B cell (primary cell): ENCODE measurements at regions of chr1 and their contacts with region 1.

Region 1: GRCh38 chr1:66282343-66282852 is 251.6 kb upstream of the SGIP1 start:
- DNase-seq: peak; percentile 94
- ATAC-seq: peak; percentile 91
- H3K4me3 ChIP-seq: peak overlapping the region in 2 of 5 experiments; percentile 10 to 39
- H3K4me3 Mint-ChIP-seq: peak overlapping the region; percentile 80
- H3K27ac ChIP-seq: peak overlapping the region; percentile 86 to 88
- H3K27ac Mint-ChIP-seq: peak overlapping the region; percentile 92
- H3K4me1 ChIP-seq: peaks cover 62 to 67% of the 10 kb centered on the region in 2 donors
- H3K4me1 Mint-ChIP-seq: peaks cover 79% of the 10 kb centered on the region
- H3K27me3 ChIP-seq: no peaks in the 10 kb centered on the region
- H3K27me3 Mint-ChIP-seq: no peaks in the 10 kb centered on the region
- CTCF ChIP-seq: peak; percentile 44

Region 2: DNA sequence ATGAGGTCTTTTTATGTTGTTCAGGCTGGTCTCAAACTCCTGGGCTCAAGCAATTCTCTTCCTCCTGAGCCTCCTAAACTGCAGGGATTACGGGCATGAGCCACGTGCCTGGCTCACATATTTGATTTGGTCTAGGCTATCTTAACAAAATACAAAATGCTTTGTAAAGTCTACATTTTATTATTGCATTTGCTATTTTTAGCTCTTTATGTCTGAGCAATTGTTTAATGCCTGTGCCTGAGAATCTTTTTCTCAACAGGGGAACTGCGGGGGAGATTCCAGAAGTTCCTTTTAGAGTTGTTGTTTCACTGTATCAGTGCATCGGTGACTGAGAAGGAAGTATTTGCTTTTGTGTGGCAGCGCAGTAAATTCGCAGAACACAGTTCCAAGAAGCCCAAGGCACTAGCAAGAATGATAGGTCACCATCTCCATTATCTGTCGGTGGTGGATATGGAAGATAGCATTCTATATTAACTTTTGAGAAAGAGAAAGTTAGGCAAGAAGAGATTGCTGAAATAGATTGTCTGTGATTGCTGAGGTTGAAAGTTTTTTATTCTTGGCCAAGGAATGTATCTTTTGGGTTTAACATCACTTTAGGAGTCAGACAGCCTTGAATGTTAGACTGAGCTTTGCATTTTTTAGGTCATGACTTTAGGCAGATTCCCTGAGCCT is 322.4 kb before region 1 on chr1:
- CTCF ChIA-PET with region 1: no interaction called
- POLR2A ChIA-PET with region 1: no interaction called
- intact Hi-C with region 1: no loop called
- DNase-seq: no peak
- ATAC-seq: no peak
- H3K4me3 ChIP-seq: no peak overlapping the region
- H3K4me3 Mint-ChIP-seq: no peak overlapping the region
- H3K27ac ChIP-seq: no peak overlapping the region
- H3K27ac Mint-ChIP-seq: no peak overlapping the region
- H3K4me1 ChIP-seq: no peaks in the 10 kb centered on the region
- H3K4me1 Mint-ChIP-seq: no peaks in the 10 kb centered on the region
- H3K27me3 ChIP-seq: peaks cover 0 to 1% (median 0%) of the 10 kb centered on the region in 4 experiments
- H3K27me3 Mint-ChIP-seq: peaks cover 12% of the 10 kb centered on the region
- CTCF ChIP-seq: no peak

Region 3: DNA sequence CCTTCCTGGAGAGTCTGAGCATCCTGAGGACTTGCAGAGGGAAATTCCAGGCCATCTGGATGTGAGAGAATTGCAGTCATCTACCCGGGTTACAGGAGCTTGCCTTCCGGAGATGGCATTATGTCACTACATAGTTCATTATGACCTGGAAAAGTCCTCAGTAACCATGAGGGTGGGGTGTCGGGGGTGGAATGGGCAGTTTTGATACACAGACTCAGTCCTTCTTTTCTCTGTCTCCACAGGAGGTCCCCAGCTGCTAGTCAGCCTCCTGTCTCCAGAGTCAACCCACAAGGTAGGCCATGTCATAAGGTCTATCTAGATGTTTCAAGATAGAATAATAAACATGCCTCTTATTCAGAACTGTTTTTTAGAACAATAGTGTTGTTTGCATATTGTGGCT is 16.6 kb before region 1 on chr1:
- CTCF ChIA-PET with region 1: interaction called, 8 read pairs
- POLR2A ChIA-PET with region 1: interaction called, 7 read pairs
- intact Hi-C with region 1: loop called (anchors 1 kb)
- DNase-seq: no peak
- ATAC-seq: peak; percentile 31
- H3K4me3 ChIP-seq: no peak overlapping the region
- H3K4me3 Mint-ChIP-seq: no peak overlapping the region
- H3K27ac ChIP-seq: no peak overlapping the region
- H3K27ac Mint-ChIP-seq: no peak overlapping the region
- H3K4me1 ChIP-seq: peaks cover 0 to 4% of the 10 kb centered on the region in 2 donors
- H3K4me1 Mint-ChIP-seq: peaks cover 15% of the 10 kb centered on the region
- H3K27me3 ChIP-seq: no peaks in the 10 kb centered on the region
- H3K27me3 Mint-ChIP-seq: no peaks in the 10 kb centered on the region
- CTCF ChIP-seq: no peak

Region 4: GRCh38 chr1:66339944-66340343 is 57.5 kb after region 1 on chr1:
- CTCF ChIA-PET with region 1: interaction called, 12 read pairs
- POLR2A ChIA-PET with region 1: interaction called, 10 read pairs
- intact Hi-C with region 1: loop called (anchors 1 kb)
- DNase-seq: peak; percentile 50
- ATAC-seq: no peak
- H3K4me3 ChIP-seq: peak overlapping the region in 3 of 5 experiments; percentile 22 to 27 (median 27)
- H3K4me3 Mint-ChIP-seq: peak overlapping the region; percentile 82
- H3K27ac ChIP-seq: peak overlapping the region; percentile 53 to 94
- H3K27ac Mint-ChIP-seq: peak overlapping the region; percentile 67
- H3K4me1 ChIP-seq: peaks cover 77 to 78% of the 10 kb centered on the region in 2 donors
- H3K4me1 Mint-ChIP-seq: peaks cover 77% of the 10 kb centered on the region
- H3K27me3 ChIP-seq: no peaks in the 10 kb centered on the region
- H3K27me3 Mint-ChIP-seq: no peaks in the 10 kb centered on the region
- CTCF ChIP-seq: no peak

Region 5: DNA sequence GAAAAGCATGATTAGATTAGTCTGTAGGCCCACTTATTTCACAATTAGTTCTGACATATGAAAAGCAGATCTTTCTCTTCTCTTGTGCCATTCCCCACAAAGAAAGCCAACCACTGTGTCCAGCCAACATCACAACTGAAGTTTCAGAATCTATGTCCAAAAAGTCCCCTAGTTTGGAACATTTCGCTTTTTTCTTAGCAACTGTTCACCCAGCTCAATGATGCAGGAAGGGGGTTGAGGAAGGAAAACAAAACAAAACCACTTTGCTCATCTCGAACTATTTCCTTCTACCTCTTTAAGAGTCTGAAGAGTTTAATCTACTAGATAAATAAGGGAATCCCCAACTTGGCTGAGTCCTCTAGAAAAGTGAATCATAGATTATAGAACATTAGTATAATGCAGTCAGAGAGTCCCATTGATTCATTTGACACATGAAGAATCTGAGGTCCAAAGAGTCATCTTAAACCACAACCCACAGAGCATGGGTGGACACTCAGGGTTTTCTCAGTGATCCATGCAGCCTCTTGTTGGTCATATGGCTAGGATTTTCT is 92.2 kb after region 1 on chr1:
- CTCF ChIA-PET with region 1: interaction called, 7 read pairs
- POLR2A ChIA-PET with region 1: interaction called, 6 read pairs
- intact Hi-C with region 1: loop called (anchors 1 kb)
- DNase-seq: peak; percentile 90
- ATAC-seq: peak; percentile 73
- H3K4me3 ChIP-seq: peak overlapping the region in 1 of 5 experiments; percentile 13
- H3K4me3 Mint-ChIP-seq: peak overlapping the region; percentile 69
- H3K27ac ChIP-seq: peak overlapping the region; percentile 83 to 90
- H3K27ac Mint-ChIP-seq: peak overlapping the region; percentile 81
- H3K4me1 ChIP-seq: peaks cover 82 to 89% of the 10 kb centered on the region in 2 donors
- H3K4me1 Mint-ChIP-seq: peaks cover 86% of the 10 kb centered on the region
- H3K27me3 ChIP-seq: no peaks in the 10 kb centered on the region
- H3K27me3 Mint-ChIP-seq: no peaks in the 10 kb centered on the region
- CTCF ChIP-seq: no peak

Region 6: DNA sequence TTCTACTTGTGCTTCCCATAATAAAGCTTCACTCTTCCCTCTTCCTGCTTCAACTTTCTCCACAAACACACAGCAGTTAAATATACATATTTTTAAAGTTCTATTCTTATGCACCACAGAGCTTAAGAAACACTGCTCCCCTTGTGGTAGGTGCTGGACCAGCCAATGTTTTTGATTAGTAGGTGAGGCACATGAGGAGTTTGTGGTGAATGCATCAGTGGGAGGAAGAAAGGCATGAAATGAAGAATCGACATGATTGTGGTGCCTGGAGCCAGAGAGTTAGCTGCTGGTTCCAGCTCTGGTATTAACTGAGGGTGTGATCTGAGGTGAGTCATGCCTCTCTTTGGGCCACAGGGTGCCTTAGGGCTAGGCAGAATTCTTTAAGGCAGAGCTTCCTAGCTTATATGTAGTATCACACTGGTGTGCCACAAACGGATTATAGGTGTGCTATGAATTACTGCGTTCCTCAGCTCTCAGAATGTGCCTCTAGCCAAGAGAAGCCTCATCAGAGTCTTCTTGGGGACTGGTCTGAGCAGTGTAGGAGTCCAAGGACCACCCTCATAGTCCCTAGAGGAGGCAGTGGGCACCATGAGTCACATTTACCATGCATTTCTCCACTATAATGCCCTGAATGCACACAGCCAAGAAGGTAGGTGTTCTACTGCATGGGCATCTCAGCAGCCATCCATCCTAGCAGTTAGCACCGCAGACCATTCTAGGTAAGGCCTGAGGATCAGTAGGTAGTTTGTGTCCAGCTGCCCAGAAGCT is 154.2 kb after region 1 on chr1:
- CTCF ChIA-PET with region 1: interaction called, 8 read pairs
- POLR2A ChIA-PET with region 1: no interaction called
- intact Hi-C with region 1: loop called (anchors 2 kb)
- DNase-seq: peak; percentile 52
- ATAC-seq: peak; percentile 65
- H3K4me3 ChIP-seq: no peak overlapping the region
- H3K4me3 Mint-ChIP-seq: no peak overlapping the region
- H3K27ac ChIP-seq: no peak overlapping the region
- H3K27ac Mint-ChIP-seq: peak overlapping the region; percentile 32
- H3K4me1 ChIP-seq: peaks cover 20 to 21% of the 10 kb centered on the region in 2 donors
- H3K4me1 Mint-ChIP-seq: peaks cover 34% of the 10 kb centered on the region
- H3K27me3 ChIP-seq: no peaks in the 10 kb centered on the region
- H3K27me3 Mint-ChIP-seq: no peaks in the 10 kb centered on the region
- CTCF ChIP-seq: peak; percentile 16

Region 7: GRCh38 chr1:66705110-66705509 is 422.7 kb after region 1 on chr1:
- CTCF ChIA-PET with region 1: no interaction called
- POLR2A ChIA-PET with region 1: no interaction called
- intact Hi-C with region 1: no loop called
- DNase-seq: no peak
- ATAC-seq: no peak
- H3K4me3 ChIP-seq: no peak overlapping the region
- H3K4me3 Mint-ChIP-seq: no peak overlapping the region
- H3K27ac ChIP-seq: no peak overlapping the region
- H3K27ac Mint-ChIP-seq: no peak overlapping the region
- H3K4me1 ChIP-seq: no peaks in the 10 kb centered on the region
- H3K4me1 Mint-ChIP-seq: no peaks in the 10 kb centered on the region
- H3K27me3 ChIP-seq: no peaks in the 10 kb centered on the region
- H3K27me3 Mint-ChIP-seq: peaks cover 3% of the 10 kb centered on the region
- CTCF ChIP-seq: no peak